ENCODE measurements at regions of chrX and their contacts with region 1.

Region 1: GRCh38 chrX:136812286-136812685 is 31.6 kb upstream of the ARHGEF6 start:
- DNase-seq: no peak
- ATAC-seq: no peak

Region 2: GRCh38 chrX:136779346-136779781 is 32.9 kb before region 1 on chrX:
- intact Hi-C with region 1: loop called (anchors 5 kb)
- DNase-seq: no peak
- ATAC-seq: no peak

Region 3: DNA sequence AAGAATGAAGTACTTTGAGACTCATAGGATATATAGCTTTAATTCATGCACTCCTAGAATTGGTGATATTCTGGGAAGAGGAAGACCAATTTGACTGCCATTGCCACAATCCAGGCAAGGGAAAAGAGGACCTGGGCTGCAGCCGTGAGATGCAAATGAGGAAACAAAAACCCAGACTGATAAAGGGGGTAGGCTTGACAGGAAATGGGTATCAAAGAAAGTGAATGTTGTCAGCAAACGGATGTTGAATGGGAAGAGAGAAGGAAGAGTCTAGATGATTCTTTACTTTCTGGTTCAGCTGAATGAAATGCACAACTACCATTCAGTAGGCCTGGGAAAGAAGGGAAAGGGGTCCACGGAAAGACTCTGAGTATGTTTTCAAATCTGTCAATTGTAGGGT is 14.5 kb before region 1 on chrX:
- intact Hi-C with region 1: no loop called
- DNase-seq: no peak
- ATAC-seq: no peak

Measured in Right ventricle myocardium inferior (tissue), 1 donor.